Activated naive CD4-positive, alpha-beta T cell treated with anti-CD3 and anti-CD28 coated beads for 36 hours (primary cell): ENCODE measurements at regions of chr11 and their contacts with region 1.

Region 1: DNA sequence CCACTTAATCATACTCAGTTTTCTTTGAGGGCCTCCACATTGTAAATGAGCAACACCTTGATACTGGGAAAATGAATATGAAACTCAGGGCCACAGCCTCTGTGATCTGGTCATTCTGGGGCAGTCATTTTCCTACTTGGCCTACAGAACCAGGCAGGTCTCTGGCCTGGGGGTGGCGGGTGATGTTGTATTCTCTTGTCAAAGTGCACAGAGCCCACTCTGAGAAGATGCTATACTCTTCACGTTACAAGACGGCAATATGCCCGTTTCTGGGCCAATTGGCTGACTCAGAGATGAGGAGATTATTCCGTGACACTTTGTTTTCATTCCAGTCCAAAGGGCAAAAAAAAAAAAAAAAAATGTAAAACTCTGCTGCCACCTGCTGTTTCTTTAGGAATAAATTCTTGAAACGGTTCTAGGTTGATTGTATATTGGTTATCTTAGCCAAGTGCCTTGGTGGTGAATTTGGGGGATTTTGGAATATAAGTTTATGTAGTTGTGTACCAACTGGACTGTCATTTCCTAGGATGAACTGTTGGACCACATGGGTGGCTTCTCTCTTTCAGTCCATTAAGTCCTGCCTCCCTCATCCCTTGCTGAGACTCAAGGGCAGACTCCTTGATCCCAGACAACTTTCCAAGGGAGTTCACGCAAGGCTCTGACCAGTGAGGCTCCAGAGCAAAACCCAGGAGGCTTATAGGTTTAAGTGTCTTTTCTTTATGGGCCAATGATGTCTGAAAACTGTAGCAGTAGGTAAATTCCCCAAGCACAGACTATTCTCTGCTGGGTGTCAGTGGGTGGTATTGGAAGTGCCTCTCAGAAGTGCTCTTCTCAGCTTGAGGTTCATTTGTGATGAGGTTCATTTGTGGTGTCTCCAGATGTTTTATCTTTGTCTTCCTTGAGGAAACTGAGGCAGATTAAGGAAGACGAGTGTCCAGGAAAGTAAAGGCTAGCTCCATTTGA is 18.2 kb downstream of the ADM start:
- DNase-seq: peak; percentile 69
- H3K4me3 Mint-ChIP-seq: peak overlapping the region; percentile 38
- H3K27ac Mint-ChIP-seq: peak overlapping the region; percentile 69
- H3K4me1 Mint-ChIP-seq: peaks cover 12% of the 10 kb centered on the region
- H3K27me3 Mint-ChIP-seq: no peaks in the 10 kb centered on the region

Region 2: DNA sequence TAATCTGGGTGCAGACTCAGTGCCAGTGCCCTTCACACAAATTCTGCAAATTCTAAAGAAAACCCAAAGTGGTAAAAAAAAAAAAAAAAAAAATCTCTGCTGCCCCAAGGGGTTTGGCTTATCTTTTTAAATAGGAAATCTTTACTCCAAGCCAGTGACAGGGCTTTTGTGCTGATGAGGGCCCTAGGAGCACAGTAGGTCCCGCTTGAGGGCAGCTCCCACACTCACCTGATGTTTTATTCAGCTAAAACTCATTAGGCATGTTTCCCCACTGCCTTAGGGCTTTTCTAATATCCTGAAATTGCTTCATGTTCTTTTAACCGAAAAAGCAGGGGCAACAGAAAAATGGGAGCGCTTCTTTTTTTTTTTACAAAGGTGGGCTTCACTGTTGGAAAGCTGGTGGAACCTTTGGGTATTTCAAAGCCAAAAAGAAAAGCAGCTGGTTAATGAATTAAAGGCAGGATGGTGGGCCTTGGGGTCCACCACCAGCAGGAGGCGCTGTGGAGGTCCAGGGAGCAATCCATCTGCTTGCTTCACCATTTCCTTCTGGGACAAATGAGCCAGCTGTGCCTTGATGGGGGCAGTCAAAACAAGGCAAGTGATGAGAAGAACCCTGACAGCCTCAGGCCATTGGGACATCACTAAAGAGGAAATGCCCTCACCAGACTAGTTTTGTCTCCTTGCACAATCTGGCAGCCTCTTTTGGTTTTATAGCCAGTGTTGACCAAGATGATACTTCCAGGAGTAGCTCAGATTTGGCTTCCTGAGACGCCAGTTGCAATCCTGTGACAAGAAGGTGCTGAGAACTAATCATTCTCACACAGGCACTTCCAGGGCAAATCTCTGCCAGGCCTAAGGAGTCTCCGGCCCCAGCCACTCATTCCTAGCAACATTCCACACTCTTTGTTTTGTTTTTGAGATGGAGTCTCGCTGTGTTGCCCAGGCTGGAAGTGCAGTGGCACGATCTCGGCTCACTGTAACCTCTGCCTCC is 788.0 kb before region 1 on chr11:
- CTCF ChIA-PET with region 1: interaction called, 3 read pairs
- intact Hi-C with region 1: loop called (anchors 1 kb)
- DNase-seq: peak; percentile 87
- H3K4me3 Mint-ChIP-seq: no peak overlapping the region
- H3K27ac Mint-ChIP-seq: no peak overlapping the region
- H3K4me1 Mint-ChIP-seq: no peaks in the 10 kb centered on the region
- H3K27me3 Mint-ChIP-seq: no peaks in the 10 kb centered on the region

Region 3: DNA sequence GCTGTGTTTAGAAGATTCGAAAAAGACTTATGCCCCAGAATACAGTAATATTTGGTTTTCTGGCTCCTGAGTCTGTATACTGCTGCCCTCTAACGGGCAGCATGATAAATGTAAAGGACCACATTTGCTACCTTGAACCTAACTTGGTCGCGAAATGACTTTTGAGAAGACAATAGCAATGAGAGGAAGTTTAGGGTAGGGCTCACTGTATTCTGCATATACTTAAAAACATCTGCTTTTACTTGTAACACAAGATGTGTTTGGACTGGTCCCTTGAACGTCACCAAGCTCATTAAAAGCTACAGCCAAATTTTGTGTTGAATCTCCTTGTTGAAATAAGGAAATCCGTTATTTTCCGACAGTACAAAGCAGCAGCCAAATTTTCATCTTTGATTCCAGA is 350.1 kb before region 1 on chr11:
- CTCF ChIA-PET with region 1: no interaction called
- intact Hi-C with region 1: loop called (anchors 1 kb)
- DNase-seq: peak; percentile 54
- H3K4me3 Mint-ChIP-seq: no peak overlapping the region
- H3K27ac Mint-ChIP-seq: no peak overlapping the region
- H3K4me1 Mint-ChIP-seq: no peaks in the 10 kb centered on the region
- H3K27me3 Mint-ChIP-seq: no peaks in the 10 kb centered on the region

Region 4: DNA sequence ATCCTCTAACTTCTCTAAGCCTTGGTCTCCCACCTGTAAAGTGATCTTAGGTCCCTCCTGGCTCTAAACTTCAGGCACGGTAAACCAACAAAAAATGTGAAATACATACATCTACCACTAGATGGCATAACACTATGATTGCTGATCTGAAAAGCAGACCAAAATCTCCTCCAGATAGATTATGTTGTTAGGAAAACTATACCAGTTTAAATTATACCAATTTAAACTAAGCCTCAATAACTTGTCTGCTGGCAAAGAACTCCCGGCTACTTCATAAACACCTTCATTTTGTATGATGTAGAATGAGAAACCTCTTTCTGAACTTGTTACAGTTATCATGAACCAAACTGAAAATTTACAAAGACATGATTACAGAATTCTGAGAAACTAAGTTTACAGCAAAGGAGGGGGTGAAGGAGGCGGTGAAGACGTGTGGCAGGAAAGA is 115.0 kb before region 1 on chr11:
- CTCF ChIA-PET with region 1: interaction called, 15 read pairs
- intact Hi-C with region 1: loop called (anchors 1 kb)
- DNase-seq: no peak
- H3K4me3 Mint-ChIP-seq: no peak overlapping the region
- H3K27ac Mint-ChIP-seq: no peak overlapping the region
- H3K4me1 Mint-ChIP-seq: no peaks in the 10 kb centered on the region
- H3K27me3 Mint-ChIP-seq: no peaks in the 10 kb centered on the region

Region 5: DNA sequence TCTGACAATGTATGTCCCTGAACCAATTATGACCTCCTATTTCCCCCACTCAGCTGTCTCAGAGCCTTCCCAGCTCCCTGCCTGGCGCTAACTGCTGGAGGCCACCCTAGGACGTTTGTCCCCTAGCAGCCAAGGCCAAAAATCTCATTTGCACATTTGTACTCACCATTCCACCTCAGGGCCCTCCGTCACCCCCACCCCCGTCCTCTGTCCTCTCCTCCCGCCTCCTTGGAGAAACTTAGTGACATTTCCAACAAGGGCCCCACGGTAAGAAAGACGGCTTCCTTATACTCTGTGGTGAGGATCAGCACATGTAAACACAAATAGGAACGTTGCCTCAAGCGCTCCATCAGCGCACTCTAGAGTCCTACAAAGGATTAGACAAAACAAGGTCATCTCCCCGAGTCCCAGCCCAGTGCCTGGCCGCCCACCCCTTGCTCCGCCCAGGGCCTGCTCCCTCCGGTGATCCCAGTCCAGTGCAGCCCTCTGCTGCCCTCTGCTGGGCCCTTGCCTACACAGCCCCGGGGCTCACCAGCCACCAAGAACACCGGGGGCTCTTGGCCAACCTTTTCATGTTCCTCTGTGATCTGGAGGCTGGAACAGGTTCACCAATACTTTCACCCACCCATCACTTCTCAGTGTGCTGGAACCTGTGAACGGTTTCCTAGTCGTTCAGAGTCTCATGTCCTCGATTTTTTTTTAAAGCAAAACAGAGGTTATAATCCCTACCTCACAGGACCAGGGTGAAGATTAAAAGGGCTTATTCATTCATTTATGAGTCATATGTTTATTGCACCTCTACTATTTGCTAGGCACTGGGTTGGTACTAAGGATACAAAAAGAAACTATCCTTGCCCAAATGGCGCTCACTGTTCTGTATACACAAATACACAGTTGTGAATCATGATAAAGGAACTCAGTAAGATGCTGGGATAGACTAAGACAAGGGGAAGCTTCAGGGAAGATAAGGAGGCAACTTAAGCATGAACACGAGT is 412.7 kb after region 1 on chr11:
- CTCF ChIA-PET with region 1: no interaction called
- intact Hi-C with region 1: loop called (anchors 2 kb)
- DNase-seq: peak; percentile 90
- H3K4me3 Mint-ChIP-seq: peak overlapping the region; percentile 54
- H3K27ac Mint-ChIP-seq: no peak overlapping the region
- H3K4me1 Mint-ChIP-seq: peaks cover 5% of the 10 kb centered on the region
- H3K27me3 Mint-ChIP-seq: peaks cover 6% of the 10 kb centered on the region